AG04449 (cell line): ENCODE measurements at regions of chr12 and their contacts with region 1.

Region 1: DNA sequence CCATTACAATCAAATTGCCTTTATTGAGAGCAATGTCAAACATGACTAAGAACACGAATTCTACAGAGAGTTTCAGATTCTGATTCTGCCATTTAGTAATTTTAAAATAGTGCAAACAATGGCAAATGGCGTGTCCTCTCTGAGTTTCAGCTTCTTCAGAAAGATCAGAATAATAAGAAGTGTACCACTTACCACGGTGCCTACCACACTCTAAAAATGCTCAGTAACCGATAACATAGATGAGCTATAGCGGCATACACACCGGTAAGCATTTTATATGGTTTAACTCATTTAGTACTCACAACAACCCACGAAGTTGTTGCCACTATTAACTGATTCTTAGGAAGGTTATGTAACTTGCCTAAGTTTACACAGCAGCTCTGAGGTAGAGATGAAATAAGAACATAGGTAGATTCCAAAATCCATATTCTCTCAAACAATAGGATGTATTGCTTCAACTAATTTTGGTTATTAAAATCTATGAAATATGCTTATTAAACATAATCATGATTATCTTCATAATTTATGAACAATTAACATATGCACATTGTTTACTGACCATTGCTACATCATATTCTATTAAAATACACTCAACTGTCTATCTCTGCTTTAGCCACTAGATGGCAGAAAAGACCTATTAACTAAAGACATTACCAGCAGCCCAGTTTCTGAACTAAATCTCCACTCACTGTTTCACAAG is 38.3 kb downstream of the SLC6A15 start:
- DNase-seq: peak; percentile 5
- H3K4me3 ChIP-seq: no peak overlapping the region
- CTCF ChIP-seq: peak; percentile 55

Region 2: GRCh38 chr12:84814664-84815245 is 59.5 kb before region 1 on chr12:
- CTCF ChIA-PET with region 1: no interaction called
- POLR2A ChIA-PET with region 1: no interaction called
- DNase-seq: no peak
- H3K4me3 ChIP-seq: no peak overlapping the region
- CTCF ChIP-seq: no peak

Region 3: DNA sequence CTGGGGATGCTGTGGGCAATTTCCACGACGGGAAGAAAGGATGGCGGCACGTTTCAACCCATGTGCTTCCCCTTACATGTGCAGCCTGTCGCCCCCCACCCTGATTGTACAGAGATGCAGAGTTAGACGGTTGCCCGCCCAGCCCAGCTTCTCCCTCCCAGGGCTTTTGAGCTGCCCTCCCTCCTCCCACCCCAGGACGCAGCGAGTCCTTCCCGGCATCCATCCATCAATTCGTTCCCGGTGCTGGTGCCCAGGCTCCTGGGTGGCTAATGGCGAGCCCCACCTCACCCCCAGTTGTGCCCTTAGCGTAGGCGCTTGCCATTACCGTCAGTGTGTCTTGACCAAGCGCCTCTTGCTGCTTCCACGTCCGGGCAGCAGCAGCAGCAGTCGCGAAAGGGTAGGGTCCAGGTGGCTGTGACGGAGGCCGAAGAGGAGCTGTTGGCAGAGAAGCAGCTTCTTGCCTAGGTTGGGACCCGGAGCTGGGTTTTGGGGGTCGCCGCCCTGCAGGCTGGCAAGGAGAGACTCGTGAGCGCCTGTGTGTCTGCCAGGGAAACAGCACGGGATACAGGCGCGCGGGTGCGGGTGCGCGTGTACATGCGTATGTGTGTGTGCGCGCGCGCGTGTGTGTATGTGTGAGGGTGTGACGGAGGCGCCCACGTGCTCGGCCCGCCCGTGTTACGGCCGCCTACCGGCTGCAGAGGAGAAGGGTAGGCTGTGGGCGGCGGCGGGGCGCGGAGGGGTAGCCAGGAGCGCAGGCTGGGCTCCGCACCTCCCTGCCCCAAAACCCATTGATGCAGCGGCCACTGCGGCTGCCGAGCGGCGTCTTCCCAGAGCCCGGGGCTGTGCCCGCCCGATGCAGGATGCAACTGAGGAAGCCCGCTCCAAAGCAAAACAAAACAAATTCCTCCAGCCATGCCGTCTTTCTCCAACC is 38.2 kb after region 1 on chr12 and contains the start of gene SLC6A15:
- CTCF ChIA-PET with region 1: no interaction called
- POLR2A ChIA-PET with region 1: no interaction called
- DNase-seq: no peak
- H3K4me3 ChIP-seq: peak within 1 kb of the TSS; percentile 64
- CTCF ChIP-seq: peak; percentile 51

Region 4: DNA sequence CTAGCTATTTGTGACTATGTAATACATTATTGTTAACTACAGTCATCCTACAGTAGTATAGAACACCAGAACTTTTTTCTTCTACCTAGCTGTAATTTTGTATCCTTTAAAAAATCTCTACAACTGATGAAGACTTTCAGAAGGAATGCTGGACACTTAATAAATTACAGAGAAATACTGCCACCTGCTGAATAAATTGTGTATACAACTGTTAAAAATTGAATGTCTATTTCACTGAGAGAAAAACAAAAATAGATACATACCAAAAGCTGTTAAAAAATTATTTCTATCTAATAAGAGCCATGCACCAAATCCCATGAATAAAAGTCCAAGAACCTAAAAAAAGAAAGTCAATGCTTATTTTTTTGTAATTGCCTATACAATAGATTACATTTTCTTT is 155.2 kb after region 1 on chr12:
- CTCF ChIA-PET with region 1: interaction called, 296 read pairs
- POLR2A ChIA-PET with region 1: no interaction called
- DNase-seq: no peak
- H3K4me3 ChIP-seq: no peak overlapping the region
- CTCF ChIP-seq: no peak

Region 5: DNA sequence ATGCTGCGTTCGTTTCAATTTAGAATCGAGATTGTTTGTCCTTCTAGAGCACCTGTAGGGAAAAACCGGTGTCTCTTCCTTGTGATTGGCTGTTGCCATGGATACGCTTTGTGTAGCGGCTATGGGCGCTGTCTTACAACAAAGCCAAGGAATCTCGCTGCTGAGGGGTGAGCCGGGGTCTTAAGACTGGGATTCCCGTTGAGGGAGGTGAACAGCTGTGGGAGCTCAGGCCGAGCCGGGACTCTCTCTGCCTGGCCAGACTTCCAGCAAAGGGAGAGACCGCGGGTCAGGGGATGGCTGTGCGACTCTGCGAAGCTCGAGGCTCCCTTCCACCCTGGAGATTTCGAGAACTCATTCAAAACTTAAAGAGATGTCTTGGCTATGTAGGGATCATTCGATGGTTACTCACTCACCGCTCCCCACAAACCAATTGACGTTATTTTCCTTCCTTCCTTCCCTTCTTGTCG is 162.0 kb after region 1 on chr12 and contains the starts of genes LRRIQ1 and TSPAN19:
- CTCF ChIA-PET with region 1: interaction called, 296 read pairs
- POLR2A ChIA-PET with region 1: no interaction called
- DNase-seq: peak; percentile 12
- H3K4me3 ChIP-seq: peak within 1 kb of the TSS; percentile 66
- CTCF ChIP-seq: no peak

Region 6: GRCh38 chr12:85057370-85057963 is 183.2 kb after region 1 on chr12:
- CTCF ChIA-PET with region 1: interaction called, 68 read pairs
- POLR2A ChIA-PET with region 1: no interaction called
- DNase-seq: no peak
- H3K4me3 ChIP-seq: no peak overlapping the region
- CTCF ChIP-seq: peak; percentile 55

Region 7: GRCh38 chr12:85130632-85131031 is 256.4 kb after region 1 on chr12:
- CTCF ChIA-PET with region 1: no interaction called
- POLR2A ChIA-PET with region 1: no interaction called
- DNase-seq: no peak
- H3K4me3 ChIP-seq: no peak overlapping the region
- CTCF ChIP-seq: no peak